ENCODE measurements at regions of chr6 and their contacts with region 1.

Region 1: GRCh38 chr6:72411872-72412708 is 209.8 kb upstream of the KCNQ5 start:
- DNase-seq: peak; percentile 67
- ATAC-seq: peak; percentile 99
- H3K4me3 Mint-ChIP-seq: no peak overlapping the region
- H3K27ac Mint-ChIP-seq: no peak overlapping the region
- H3K4me1 Mint-ChIP-seq: peaks cover 5% of the 10 kb centered on the region
- H3K27me3 Mint-ChIP-seq: peaks cover 20% of the 10 kb centered on the region
- CTCF ChIP-seq: peak; percentile 100

Region 2: GRCh38 chr6:72245565-72245964 is 166.5 kb before region 1 on chr6:
- CTCF ChIA-PET with region 1: no interaction called
- POLR2A ChIA-PET with region 1: no interaction called
- intact Hi-C with region 1: no loop called
- DNase-seq: no peak
- ATAC-seq: no peak
- H3K4me3 Mint-ChIP-seq: no peak overlapping the region
- H3K27ac Mint-ChIP-seq: no peak overlapping the region
- H3K4me1 Mint-ChIP-seq: no peaks in the 10 kb centered on the region
- H3K27me3 Mint-ChIP-seq: no peaks in the 10 kb centered on the region
- CTCF ChIP-seq: no peak

Region 3: DNA sequence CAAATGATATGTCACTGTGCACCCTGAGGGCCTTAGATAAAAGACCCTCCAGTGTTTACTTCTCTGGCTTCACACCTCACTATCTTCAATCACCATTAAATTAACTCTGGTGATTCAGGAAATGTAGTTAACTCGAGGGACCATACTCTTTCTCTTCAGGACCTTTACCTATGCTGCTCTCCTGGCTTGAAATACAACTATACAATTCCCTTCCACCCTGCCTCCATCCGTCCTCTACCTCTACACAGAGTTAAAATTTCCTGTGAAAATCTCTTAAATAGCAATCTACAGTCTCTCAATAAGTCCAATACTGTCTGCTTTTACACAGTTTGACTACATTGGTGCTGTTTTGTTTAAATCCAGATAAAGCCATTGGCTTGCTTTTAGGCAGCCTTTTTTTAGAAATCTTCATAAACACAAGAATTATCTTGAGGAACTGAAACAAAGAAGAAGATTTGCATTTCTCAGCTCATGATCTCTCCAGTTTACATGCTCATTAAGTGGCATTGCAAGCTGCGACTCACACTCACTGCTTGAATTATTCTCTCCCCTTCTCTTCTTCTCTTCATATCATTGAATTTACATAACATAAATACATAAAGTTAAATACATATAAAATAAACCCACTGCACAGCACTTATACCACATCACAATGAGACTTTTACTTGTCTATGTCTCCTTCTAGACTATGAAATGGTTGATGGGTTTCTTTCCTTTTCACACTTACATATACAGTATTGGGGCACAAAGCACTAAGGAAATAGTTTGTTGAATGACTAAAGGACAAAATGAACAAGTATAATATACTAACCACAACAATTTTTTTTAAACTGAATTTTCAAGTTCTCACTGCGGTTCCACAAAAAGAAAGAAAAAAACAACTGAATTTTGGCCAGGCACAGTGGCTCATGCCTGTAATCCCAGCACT is 29.2 kb before region 1 on chr6:
- CTCF ChIA-PET with region 1: interaction called, 7 read pairs
- POLR2A ChIA-PET with region 1: interaction called, 5 read pairs
- intact Hi-C with region 1: loop called (anchors 2 kb)
- DNase-seq: no peak
- ATAC-seq: peak; percentile 88
- H3K4me3 Mint-ChIP-seq: peak overlapping the region; percentile 65
- H3K27ac Mint-ChIP-seq: peak overlapping the region; percentile 88
- H3K4me1 Mint-ChIP-seq: peaks cover 35% of the 10 kb centered on the region
- H3K27me3 Mint-ChIP-seq: no peaks in the 10 kb centered on the region
- CTCF ChIP-seq: no peak

Region 4: GRCh38 chr6:73262671-73263569 is 850.8 kb after region 1 on chr6 and contains the start of gene KHDC1:
- CTCF ChIA-PET with region 1: interaction called, 3 read pairs
- POLR2A ChIA-PET with region 1: no interaction called
- intact Hi-C with region 1: loop called (anchors 5 kb)
- DNase-seq: peak; percentile 59
- ATAC-seq: peak; percentile 91
- H3K4me3 Mint-ChIP-seq: peak within 1 kb of the TSS; percentile 88
- H3K27ac Mint-ChIP-seq: peak within 1 kb of the TSS; percentile 70
- H3K4me1 Mint-ChIP-seq: peaks cover 18% of the 10 kb centered on the region
- H3K27me3 Mint-ChIP-seq: no peaks in the 10 kb centered on the region
- CTCF ChIP-seq: no peak
- total RNA-seq, gene KHDC1: 2.4 and 2.7 TPM in 2 replicates